ENCODE measurements at regions of chr20 and their contacts with region 1.

Region 1: GRCh38 chr20:17569616-17570346 is at the start of gene DSTN:
- DNase-seq: peak; percentile 76 to 97
- H3K4me3 ChIP-seq: peak within 1 kb of the TSS; percentile 93 to 99
- H3K27ac ChIP-seq: peak within 1 kb of the TSS; percentile 98 to 100
- H3K4me1 ChIP-seq: peaks cover 11 to 34% of the 10 kb centered on the region in 2 donors
- H3K27me3 ChIP-seq: no peaks in the 10 kb centered on the region
- CTCF ChIP-seq: no peak
- total RNA-seq, gene DSTN: 452 TPM

Region 2: GRCh38 chr20:17536944-17537444 is 32.8 kb before region 1 on chr20:
- intact Hi-C with region 1: loop called (anchors 1 kb)
- DNase-seq: peak in 1 of 2 donors; percentile 89
- H3K4me3 ChIP-seq: no peak overlapping the region
- H3K27ac ChIP-seq: peak overlapping the region; percentile 7 to 49
- H3K4me1 ChIP-seq: peaks cover 5 to 21% of the 10 kb centered on the region in 2 donors
- H3K27me3 ChIP-seq: no peaks in the 10 kb centered on the region
- CTCF ChIP-seq: peak; percentile 82 to 95 (median 92)

Region 3: DNA sequence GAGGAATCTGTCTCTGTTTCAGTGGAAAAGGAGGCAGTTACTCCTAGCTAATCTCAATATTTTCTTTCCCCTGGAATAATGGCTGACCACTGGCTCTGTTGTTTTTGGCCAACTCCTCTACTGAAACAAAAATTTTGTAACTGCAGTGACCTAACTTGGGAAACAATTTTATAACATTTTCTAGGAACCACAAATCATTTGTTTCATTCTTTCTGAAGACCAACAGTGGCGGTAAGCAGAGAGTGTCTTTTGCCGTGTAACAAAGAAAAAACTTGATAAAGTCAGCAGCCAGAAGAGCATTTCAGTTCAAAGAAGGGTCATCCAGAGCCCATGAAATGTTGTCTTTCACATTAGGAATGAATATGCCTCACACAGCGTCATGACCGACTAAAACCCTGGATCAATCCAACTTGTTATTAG is 26.8 kb before region 1 on chr20:
- intact Hi-C with region 1: loop called (anchors 1 kb)
- DNase-seq: no peak
- H3K4me3 ChIP-seq: peak overlapping the region in 1 of 2 donors; percentile 10
- H3K27ac ChIP-seq: peak overlapping the region; percentile 69 to 86
- H3K4me1 ChIP-seq: peaks cover 18 to 41% of the 10 kb centered on the region in 2 donors
- H3K27me3 ChIP-seq: no peaks in the 10 kb centered on the region
- CTCF ChIP-seq: no peak

Region 4: DNA sequence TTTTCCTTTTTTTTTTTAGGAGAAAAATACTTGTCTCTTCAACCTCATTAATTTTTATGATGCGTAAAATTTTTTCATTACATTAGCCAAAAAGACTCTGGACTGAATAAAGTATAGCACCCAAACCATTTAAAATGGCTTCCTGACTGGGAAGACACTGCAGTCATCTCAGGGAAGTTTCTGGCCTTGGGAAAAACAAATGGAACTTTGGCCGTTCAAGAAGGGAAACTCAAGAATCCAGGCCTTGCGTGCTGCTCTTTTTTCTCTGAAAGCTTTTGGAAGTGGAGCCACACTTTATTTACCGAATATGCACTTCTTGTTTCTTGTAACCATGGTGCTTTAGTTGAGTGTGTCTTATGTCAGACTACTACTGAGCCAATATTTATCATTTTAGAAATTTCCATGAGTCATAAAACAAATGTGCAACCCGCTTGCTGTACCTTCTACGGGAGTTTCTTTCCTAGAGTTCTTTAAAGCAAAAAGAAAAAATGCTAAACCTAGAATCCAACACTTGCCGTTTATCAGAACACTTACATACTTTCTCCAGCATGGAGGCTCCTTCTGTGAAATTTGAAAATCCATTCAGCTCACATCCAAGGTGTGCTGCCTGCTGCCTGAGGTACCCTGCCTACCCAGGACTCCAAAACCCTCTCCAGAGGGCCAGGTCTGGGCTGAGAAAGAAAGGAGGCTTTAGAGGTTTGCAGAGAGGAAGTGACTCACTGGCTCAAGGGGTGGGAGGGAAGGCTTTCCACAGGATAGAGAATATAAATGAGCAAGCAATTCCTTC is 11.4 kb before region 1 on chr20:
- intact Hi-C with region 1: loop called (anchors 1 kb)
- DNase-seq: peak; percentile 53 to 92
- H3K4me3 ChIP-seq: peak overlapping the region; percentile 8 to 43
- H3K27ac ChIP-seq: peak overlapping the region; percentile 98 to 100
- H3K4me1 ChIP-seq: peaks cover 24 to 64% of the 10 kb centered on the region in 2 donors
- H3K27me3 ChIP-seq: no peaks in the 10 kb centered on the region
- CTCF ChIP-seq: no peak

Region 5: GRCh38 chr20:17589161-17589834 is 19.5 kb after region 1 on chr20:
- intact Hi-C with region 1: loop called (anchors 2 kb)
- DNase-seq: no peak
- H3K4me3 ChIP-seq: peak overlapping the region; percentile 28 to 55
- H3K27ac ChIP-seq: peak overlapping the region; percentile 67 to 75
- H3K4me1 ChIP-seq: peaks cover 16 to 70% of the 10 kb centered on the region in 2 donors
- H3K27me3 ChIP-seq: no peaks in the 10 kb centered on the region
- CTCF ChIP-seq: no peak

Region 6: DNA sequence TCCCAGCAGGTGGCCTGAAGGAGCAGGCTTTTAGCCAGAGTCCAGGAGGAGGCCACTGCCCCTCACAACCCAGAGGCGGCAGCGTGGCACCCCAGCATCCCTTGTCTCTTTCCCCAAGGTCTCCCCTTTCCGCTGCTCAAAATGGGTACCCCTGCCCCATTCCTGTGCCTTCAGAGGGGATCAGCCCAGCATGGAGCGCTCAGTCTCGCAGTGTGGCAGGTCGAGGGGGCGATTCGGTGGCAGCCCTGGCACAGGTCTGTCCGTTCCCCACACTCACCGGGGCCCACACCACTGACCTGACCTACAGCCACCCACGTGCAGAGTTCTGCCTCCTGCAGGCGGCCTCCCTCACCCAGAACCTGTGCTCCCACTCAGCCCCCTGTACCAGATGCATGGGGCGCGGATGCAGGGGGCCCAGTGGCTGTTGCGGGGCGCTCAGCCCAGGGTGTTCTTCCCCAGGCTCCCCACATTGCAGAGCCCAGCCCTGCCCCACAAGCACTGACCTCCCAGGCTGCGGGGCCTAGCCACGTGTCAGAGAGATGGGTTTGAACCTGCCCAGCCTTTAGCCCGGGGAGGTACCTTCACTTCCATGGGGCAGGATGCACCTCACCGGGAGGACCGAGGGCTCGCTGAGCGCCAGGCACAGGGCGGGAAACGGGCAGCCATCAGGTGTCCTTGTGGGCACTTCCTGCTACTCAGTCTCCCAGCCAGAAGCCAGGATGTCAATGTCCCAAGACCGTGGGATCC is 41.9 kb after region 1 on chr20:
- intact Hi-C with region 1: loop called (anchors 2 kb)
- DNase-seq: peak in 1 of 2 donors; percentile 67
- H3K4me3 ChIP-seq: peak overlapping the region in 1 of 2 donors; percentile 16
- H3K27ac ChIP-seq: peak overlapping the region; percentile 84 to 93
- H3K4me1 ChIP-seq: peaks cover 40 to 81% of the 10 kb centered on the region in 2 donors
- H3K27me3 ChIP-seq: no peaks in the 10 kb centered on the region
- CTCF ChIP-seq: peak in 1 of 3 experiments; percentile 33

Region 7: DNA sequence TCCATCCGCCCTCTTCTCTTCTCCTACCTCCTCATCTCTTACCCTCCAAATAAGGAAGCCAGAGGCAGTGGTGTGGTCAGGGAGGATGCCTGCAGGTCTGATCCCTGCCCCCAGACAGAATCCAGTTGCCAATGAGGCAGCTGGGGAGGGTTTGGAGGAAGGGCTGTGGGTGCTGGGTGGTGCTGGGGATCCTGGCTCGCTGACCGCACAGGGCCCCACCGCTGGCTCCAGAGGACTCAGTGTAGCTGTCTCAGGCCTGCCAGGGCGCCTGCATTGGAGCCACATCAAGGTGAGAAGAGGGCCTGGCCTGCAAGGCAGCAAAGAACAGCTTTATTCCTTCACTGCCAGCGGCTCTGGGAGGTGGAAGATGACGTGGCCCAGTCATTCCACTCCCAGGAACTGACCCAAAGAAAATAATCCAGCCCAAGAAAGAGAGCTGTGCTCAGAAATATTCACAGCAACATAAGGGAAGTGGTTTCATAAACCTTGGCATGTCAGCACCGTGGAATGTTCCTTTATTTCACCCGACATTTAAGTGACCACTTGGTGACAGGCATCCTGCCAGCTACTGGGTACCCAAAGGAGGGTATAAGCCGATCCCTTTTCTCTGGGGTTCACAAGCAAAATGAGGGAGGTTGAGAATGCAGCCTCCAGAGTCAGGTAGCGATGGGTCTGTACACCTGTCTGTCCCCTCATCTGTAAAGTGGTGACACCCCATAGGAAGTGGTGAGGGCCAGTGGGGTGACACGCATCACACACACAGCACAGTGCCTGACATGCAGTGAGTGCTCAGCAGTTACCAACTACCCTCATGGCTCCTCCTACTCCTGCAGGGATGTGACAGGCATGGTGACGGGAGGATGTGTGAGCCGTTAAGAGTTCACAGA is 273.7 kb after region 1 on chr20:
- intact Hi-C with region 1: loop called (anchors 5 kb)
- DNase-seq: peak; percentile 27 to 93
- H3K4me3 ChIP-seq: no peak overlapping the region
- H3K27ac ChIP-seq: peak overlapping the region; percentile 85 to 88
- H3K4me1 ChIP-seq: peaks cover 15 to 29% of the 10 kb centered on the region in 2 donors
- H3K27me3 ChIP-seq: no peaks in the 10 kb centered on the region
- CTCF ChIP-seq: no peak

Measured in ascending aorta (tissue), 2 donors.